Posterior vena cava (tissue), 2 donors: ENCODE measurements at regions of chr6 and their contacts with region 1.

Region 1: DNA sequence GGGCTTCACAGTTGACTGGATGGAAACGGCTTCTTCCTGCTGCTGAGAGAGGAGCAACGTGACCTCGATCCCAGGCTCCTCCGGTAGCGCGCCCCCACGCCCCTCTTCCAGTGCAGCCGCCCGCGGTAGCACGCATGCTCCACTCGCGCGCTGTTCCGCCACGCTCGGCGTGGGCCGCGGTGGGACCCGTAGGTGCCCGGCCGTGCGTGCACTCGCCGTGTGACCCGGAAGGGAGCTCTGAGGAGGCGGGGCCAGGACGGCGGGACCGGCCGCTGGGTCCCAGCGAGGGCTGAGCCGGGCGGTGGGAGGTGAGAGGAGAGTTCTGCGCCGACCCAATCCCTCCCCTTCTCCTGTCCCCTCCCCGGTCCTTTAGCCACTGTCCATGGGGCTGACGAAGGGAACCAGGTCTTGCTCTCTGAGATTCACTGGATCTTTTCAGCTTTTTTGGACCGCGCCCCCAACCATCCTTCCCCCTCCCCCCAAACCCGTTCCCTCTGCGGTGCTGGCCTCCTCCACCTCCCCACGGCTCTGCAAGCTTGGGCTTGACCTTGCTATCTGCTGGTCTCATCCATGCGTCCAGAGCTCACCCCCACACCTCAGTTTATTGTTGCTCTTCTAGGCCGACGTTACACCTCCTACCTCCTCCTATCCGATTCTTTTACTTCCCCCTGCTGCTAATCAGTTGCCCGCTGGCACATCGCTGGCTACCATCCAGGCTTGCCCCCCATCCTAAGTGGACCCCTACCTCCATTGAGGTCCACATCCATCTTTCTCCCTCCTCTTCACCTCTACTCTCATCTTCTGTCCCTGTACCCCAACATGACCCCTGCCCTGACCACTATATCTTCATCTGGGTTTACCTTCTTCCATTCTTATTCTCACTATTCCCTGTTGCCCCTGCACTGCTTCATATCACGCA is at the start of gene CUL9:
- DNase-seq: peak; percentile 96
- total RNA-seq, gene CUL9: 24.5 to 25.5 TPM

Region 2: GRCh38 chr6:43219119-43219518 is 36.9 kb after region 1 on chr6:
- intact Hi-C with region 1: loop called in 1 of 2 experiments (anchors 2 kb)
- DNase-seq: no peak

Region 3: DNA sequence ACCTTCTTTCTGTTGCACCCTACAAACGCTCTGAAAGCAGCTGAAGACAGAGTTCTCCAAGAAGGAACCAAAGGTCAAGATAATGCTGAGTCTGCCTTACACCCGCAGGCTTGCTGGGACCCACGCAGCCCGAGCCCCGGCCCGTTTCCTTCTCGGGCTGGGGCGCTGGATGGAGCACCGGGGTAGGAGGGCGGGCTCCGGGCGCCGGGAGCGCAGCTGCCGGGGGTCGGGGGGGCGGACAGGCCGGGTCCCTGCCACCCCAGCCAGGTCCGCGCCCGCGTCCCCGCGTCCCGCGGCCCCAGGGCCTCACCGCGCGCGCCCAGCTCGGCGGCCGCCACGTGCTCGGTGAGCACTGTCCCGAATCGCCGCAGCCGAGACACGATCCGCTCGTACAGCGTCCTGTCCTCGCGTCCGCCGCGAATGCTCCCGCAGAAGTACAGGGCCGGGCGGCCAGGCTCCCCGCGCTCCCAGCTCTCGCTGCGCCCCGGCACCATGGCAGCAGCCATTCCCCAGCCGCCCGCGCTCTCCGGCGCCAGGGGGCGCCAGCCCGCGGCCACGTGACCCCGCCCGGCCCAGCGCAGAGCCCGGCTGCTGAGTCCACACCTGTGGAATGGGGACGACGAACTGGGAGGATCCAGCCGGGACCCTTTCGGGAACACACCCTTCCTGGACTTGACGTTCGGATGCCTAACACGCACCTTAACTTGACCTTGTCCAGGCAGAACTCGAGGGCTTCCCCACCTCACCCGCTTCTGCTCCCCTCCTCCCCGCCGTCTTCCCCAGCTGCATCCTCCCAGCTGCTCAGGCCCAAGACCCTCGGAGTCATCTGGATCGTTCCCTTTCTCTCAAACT is 47.0 kb after region 1 on chr6 and contains the start of gene DNPH1:
- intact Hi-C with region 1: no loop called
- DNase-seq: peak; percentile 93
- total RNA-seq, gene DNPH1: 24.5 to 42.5 TPM

Region 4: GRCh38 chr6:43328528-43328927 is 146.3 kb after region 1 on chr6:
- intact Hi-C with region 1: loop called in 1 of 2 experiments (anchors 10 kb)
- DNase-seq: no peak